ENCODE measurements at regions of chr1 and their contacts with region 1.

Region 1: DNA sequence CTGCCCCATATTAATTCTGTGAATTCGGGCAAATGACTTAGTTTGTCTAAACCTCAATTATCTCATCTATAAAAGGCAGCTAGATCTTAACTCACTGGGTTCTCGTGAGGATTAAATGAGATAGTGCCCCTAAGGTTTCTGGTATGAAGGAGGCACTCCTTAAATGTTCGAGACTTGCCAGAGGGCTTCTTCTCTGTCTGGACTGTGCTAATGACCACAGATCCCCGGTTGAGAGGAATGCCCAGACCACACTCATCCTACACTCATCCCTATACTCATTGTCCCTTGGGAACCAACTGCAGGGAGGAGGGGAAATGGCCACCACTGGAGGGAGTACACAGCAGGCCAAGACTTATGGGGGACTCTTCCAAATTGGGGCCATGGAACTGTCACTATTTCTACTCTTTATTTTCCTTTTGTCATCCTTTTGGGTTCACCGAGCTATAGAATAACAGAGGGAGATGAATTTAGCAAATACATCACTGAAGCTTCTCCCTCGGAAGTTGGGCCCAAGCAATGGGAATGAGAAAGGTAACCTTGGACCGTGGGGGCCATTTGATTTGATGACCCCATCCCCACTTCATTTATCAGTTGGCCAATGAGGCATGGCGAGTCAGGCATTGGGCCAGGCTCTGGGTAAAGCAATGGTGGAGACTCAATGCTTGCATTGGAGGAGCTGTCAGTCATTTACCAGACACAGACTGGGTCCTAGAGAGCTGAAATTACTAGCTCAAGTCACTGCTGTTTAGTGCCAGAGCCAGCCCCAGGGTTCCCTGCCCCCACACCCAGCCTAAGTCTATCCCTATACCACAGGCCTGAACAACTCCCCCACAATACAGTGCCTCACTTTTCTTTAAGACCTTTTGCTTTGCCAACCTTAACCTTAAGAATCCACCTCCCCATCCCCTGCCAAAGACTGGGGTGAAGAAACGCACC is 5.2 kb downstream of the ATF3 start:
- DNase-seq: no peak
- CTCF ChIP-seq: no peak

Region 2: GRCh38 chr1:212536596-212536995 is 77.1 kb before region 1 on chr1:
- CTCF ChIA-PET with region 1: no interaction called
- POLR2A ChIA-PET with region 1: no interaction called
- DNase-seq: no peak
- CTCF ChIP-seq: no peak

Region 3: GRCh38 chr1:212595787-212596714 is 17.7 kb before region 1 on chr1:
- CTCF ChIA-PET with region 1: interaction called, 14 read pairs
- POLR2A ChIA-PET with region 1: interaction called, 34 read pairs
- DNase-seq: peak; percentile 76
- CTCF ChIP-seq: peak; percentile 50

Region 4: DNA sequence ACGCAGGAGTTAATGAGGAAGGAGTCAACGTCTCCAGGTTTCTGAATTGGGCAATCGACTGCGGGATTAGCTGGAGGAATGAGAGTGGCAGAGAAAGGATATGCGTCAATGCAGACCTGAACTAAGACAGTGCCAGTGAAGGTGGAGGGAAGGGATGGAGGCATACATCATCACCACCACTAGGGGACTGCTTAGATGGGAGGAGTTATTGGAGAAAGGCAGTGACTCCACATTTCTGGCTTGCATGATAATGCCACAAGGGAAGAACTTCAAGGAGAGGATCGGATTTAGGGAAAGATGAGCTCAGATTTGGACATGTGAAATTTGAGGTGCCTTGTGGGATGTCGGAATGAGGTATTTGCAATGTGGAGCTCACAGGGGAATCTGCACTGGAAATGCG is 354.1 kb after region 1 on chr1:
- CTCF ChIA-PET with region 1: no interaction called
- POLR2A ChIA-PET with region 1: no interaction called
- DNase-seq: no peak
- CTCF ChIP-seq: no peak

Region 5: GRCh38 chr1:213041443-213041842 is 427.7 kb after region 1 on chr1:
- CTCF ChIA-PET with region 1: no interaction called
- POLR2A ChIA-PET with region 1: no interaction called
- DNase-seq: no peak
- CTCF ChIP-seq: no peak

Region 6: DNA sequence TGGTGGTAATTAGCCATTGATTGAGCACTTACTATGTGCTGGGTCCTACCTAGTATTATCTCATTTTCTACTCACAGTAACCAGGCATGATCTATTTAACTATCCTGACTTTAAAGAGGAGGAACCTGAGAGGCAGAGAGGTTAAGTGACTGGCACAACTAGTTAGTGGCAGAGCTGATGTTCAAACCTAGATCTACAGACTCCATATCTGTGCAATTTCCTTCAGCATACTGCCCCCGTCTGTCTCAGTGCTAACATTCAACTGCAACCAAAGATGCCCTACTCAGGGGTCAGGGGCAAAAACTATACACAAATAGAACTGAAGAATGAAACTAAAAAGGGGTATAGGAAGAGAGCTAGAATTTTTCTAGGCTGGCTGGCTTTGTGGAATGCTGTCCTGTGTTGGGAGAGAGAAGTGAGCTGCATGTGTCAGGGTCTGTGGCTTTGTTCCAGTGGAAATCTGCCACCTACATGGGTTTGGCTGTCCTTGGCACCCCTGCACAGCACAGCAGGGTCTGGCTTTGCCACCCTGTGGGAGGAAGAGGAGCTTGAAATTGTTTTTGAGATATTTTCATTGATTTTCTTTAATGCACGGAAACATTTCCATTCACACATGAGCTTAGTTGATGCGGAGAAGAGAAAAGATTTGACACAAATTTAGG is 805.8 kb after region 1 on chr1:
- CTCF ChIA-PET with region 1: no interaction called
- POLR2A ChIA-PET with region 1: no interaction called
- DNase-seq: no peak
- CTCF ChIP-seq: no peak

Measured in GM10248 (cell line).